A549 (cell line): ENCODE measurements at regions of chr1 and their contacts with region 1.

Region 1: DNA sequence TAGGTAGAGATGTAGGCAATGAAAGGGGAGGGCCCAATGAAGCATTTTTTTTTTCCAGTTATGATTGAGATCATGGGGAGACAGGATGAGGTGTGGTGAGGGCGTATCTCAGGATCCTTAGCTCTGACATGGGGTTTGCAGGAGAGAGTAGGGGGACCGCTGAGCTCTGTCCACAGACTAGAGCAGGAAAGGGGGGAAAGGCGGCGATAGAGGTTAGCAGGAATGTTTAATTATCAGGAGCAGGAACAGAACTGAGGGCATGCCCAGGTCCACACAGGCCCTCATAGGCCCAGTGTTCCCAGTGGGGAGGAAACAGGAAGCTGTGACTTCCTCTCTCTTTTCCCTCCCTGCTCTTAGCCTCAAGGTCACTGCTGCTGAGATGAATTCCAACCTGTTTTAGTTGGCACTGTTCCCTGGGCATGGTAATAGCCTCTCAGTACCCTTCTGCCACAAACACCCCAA is 876 bp upstream of the RXFP4 start:
- DNase-seq: peak in 1 of 2 experiments; percentile 69
- ATAC-seq: peak; percentile 27 to 46; a peak in 5 of 6 replicates
- H3K4me3 ChIP-seq: no peak overlapping the region
- H3K27ac ChIP-seq: peak overlapping the region; percentile 76 to 86
- H3K4me1 ChIP-seq: peaks cover 61% of the 10 kb centered on the region
- CTCF ChIP-seq: no peak
- EP300 ChIP-seq: no peak
- POLR2A ChIP-seq: no peak
- RAD21 ChIP-seq: no peak

Region 2: GRCh38 chr1:155873860-155874259 is 66.7 kb before region 1 on chr1:
- CTCF ChIA-PET with region 1: no interaction called
- POLR2A ChIA-PET with region 1: no interaction called
- DNase-seq: no peak
- ATAC-seq: no peak
- H3K4me3 ChIP-seq: no peak overlapping the region
- H3K27ac ChIP-seq: no peak overlapping the region
- H3K4me1 ChIP-seq: no peaks in the 10 kb centered on the region
- CTCF ChIP-seq: no peak
- EP300 ChIP-seq: no peak
- POLR2A ChIP-seq: no peak
- RAD21 ChIP-seq: no peak

Region 3: DNA sequence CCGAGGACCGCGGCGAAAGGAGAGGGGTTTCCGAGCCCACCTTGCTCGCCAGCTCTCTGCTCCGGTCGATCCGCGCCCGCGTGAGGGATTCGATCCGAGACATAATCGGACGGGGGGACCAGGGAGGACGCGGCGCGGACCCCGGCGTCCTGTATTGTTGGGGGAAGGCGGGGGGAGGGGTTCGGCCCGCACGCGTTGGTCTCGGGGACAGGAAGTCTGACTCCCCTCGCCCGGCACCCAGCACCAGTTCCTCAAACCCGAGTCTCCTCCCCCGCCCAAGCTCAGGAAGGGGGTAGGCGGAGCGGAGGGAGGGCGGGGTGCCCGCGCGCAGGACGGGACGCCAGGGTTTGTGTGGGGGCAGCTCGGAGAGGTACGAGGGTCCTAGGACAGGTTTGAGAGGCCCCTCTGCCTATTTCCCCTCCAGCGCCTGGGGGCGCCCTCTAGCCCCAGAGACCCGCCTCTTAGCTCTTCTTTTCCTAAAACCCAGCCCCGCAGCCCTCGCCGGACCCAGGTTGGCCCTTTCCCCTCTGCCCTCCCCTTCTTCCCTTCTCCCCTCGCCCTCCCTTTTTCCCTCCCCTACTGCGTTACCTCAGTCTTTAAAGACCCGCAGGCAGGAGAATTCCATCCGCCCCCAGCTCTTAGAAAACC is 37.9 kb after region 1 on chr1 and contains the start of gene ARHGEF2:
- CTCF ChIA-PET with region 1: interaction called, 423 read pairs
- POLR2A ChIA-PET with region 1: interaction called, 10 read pairs
- DNase-seq: peak; percentile 80 to 89
- ATAC-seq: peak; percentile 64 to 85
- H3K4me3 ChIP-seq: peak within 1 kb of the TSS; percentile 90
- H3K27ac ChIP-seq: peak within 1 kb of the TSS; percentile 98 to 99
- H3K4me1 ChIP-seq: peaks cover 76% of the 10 kb centered on the region
- CTCF ChIP-seq: peak; percentile 23; the same call in 2 of the 3 replicates
- EP300 ChIP-seq: no peak
- POLR2A ChIP-seq: peak; percentile 69
- RAD21 ChIP-seq: no peak
- polyA plus RNA-seq, gene ARHGEF2: 67.4 and 69.1 TPM in 2 replicates